SK-N-SH (cell line): ENCODE measurements at regions of chr11 and their contacts with region 1.

Region 1: GRCh38 chr11:111777094-111778046 is 11.2 kb upstream of the PPP2R1B start:
- DNase-seq: peak; percentile 60
- H3K4me3 ChIP-seq: peak overlapping the region in 1 of 2 experiments; percentile 16; a peak in 1 of 4 replicates
- H3K27ac ChIP-seq: peak overlapping the region in 1 of 2 experiments; percentile 5; a peak in 1 of 4 replicates
- H3K4me1 ChIP-seq: peaks cover 5 to 7% of the 10 kb centered on the region in 2 experiments; a peak in 3 of 4 replicates
- H3K27me3 ChIP-seq: no peaks in the 10 kb centered on the region
- CTCF ChIP-seq: peak; percentile 82
- EP300 ChIP-seq: no peak
- RAD21 ChIP-seq: peak; percentile 97

Region 2: GRCh38 chr11:111586388-111586831 is 191.0 kb before region 1 on chr11:
- CTCF ChIA-PET with region 1: interaction called, 24 read pairs
- POLR2A ChIA-PET with region 1: no interaction called
- DNase-seq: peak; percentile 27
- H3K4me3 ChIP-seq: no peak overlapping the region
- H3K27ac ChIP-seq: no peak overlapping the region
- H3K4me1 ChIP-seq: peaks cover 5 to 14% of the 10 kb centered on the region in 2 experiments; a peak in 3 of 4 replicates
- H3K27me3 ChIP-seq: no peaks in the 10 kb centered on the region
- CTCF ChIP-seq: peak; percentile 74
- EP300 ChIP-seq: no peak
- RAD21 ChIP-seq: peak; percentile 78

Region 3: DNA sequence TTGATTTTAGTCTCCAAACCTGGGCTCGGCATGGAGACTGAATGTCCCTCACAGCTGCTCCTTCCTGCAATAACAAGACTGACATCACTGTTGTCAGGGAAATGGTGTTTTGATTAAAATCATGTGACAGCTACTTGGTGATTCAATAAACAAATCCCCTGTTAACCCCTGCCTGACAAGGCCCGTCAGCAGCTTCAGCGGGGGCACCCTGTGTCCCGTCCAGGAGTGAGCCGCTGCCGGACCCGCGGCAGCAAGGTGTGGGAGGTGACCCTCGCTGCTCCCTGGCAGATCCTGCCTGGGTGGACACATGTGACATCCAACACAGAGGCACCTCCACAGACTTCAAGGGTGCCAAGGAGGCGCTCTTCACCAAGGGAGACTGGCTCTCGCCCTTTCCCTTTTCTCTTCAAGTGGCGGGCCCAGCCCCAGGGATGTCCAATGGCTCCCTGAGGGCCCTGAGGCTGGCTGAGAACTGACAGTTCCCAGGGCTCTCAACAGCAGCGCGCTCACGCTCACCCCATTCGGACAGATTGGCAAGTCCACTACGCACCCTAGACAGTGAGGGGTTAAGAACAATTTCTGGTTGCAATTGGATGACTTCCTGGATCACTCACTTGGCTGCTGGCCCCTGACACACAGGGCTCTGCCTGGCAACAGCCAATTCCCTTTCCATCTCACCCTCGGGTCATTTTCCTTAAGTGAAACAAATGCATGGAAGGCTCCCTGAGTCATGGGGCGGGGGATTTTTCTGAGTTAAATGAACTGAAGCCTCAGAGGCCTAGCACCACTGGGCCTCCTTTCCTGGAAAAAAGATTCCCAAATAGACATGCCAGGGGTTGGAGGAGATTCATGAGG is 41.9 kb before region 1 on chr11:
- CTCF ChIA-PET with region 1: interaction called, 12 read pairs
- POLR2A ChIA-PET with region 1: no interaction called
- DNase-seq: peak; percentile 88
- H3K4me3 ChIP-seq: peak overlapping the region; percentile 39 to 45; a peak in 3 of 4 replicates
- H3K27ac ChIP-seq: peak overlapping the region; percentile 98 to 99
- H3K4me1 ChIP-seq: peaks cover 39 to 69% of the 10 kb centered on the region in 2 experiments
- H3K27me3 ChIP-seq: no peaks in the 10 kb centered on the region
- CTCF ChIP-seq: peak; percentile 18; the same call in 1 of the 2 replicates
- EP300 ChIP-seq: peak; percentile 42 to 91; a peak in 3 of 4 replicates
- RAD21 ChIP-seq: no peak; the same call in 1 of the 2 replicates

Region 4: GRCh38 chr11:111788051-111788450 is 10.7 kb after region 1 on chr11:
- CTCF ChIA-PET with region 1: interaction called, 14 read pairs
- POLR2A ChIA-PET with region 1: no interaction called
- DNase-seq: no peak
- H3K4me3 ChIP-seq: no peak overlapping the region
- H3K27ac ChIP-seq: no peak overlapping the region
- H3K4me1 ChIP-seq: peaks cover 0 to 2% of the 10 kb centered on the region in 2 experiments; a peak in 2 of 4 replicates
- H3K27me3 ChIP-seq: no peaks in the 10 kb centered on the region
- CTCF ChIP-seq: no peak
- EP300 ChIP-seq: no peak
- RAD21 ChIP-seq: no peak

Region 5: GRCh38 chr11:111823131-111823530 is 45.8 kb after region 1 on chr11:
- CTCF ChIA-PET with region 1: interaction called, 10 read pairs
- POLR2A ChIA-PET with region 1: no interaction called
- DNase-seq: no peak
- H3K4me3 ChIP-seq: no peak overlapping the region
- H3K27ac ChIP-seq: no peak overlapping the region
- H3K4me1 ChIP-seq: peaks cover 16 to 20% of the 10 kb centered on the region in 2 experiments
- H3K27me3 ChIP-seq: no peaks in the 10 kb centered on the region
- CTCF ChIP-seq: no peak
- EP300 ChIP-seq: no peak
- RAD21 ChIP-seq: no peak

Region 6: GRCh38 chr11:111841370-111842053 is 64.1 kb after region 1 on chr11:
- CTCF ChIA-PET with region 1: interaction called, 101 read pairs
- POLR2A ChIA-PET with region 1: no interaction called
- DNase-seq: peak; percentile 73
- H3K4me3 ChIP-seq: no peak overlapping the region
- H3K27ac ChIP-seq: peak overlapping the region; percentile 28 to 43; a peak in 2 of 4 replicates
- H3K4me1 ChIP-seq: peaks cover 3 to 7% of the 10 kb centered on the region in 2 experiments
- H3K27me3 ChIP-seq: no peaks in the 10 kb centered on the region
- CTCF ChIP-seq: peak; percentile 95
- EP300 ChIP-seq: no peak
- RAD21 ChIP-seq: peak; percentile 96